Activated CD4-positive, alpha-beta T cell treated with anti-CD3 and anti-CD28 coated beads, Interleukin-2, amount 10 ng/mL, durations not matched to agents 24 days and 14 days (primary cell): ENCODE measurements at regions of chr5 and their contacts with region 1.

Region 1: DNA sequence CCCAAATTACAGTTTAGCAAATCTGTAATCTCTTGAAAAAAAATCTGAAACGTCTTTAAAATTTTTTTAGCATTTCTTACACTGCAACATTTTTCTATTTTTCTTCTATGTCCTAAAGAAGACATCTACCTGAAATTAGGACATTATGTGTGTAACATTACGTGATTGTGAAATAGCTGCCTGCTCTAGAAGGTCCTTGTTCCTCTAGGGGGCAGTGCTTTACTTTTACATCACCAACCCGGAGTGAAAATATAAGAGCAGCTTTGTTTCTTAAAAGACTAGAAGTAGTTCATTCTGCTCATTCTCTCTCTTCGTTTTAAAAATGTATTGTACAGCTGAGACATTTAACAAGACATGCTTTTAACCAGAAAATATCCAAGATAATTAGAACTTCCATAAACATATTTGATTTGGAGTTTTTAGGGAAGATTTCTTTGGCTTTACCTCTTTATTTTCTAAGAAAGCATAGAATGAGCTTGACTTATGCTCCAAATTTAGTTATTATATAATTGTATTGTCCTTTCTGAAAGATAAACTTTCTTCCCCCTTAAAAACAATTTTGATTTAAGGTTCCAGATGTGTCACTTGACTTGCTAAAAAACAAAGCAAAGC is 48.1 kb upstream of the RIOK2 start:
- DNase-seq: peak; percentile 78
- H3K4me3 Mint-ChIP-seq: no peak overlapping the region
- H3K27ac Mint-ChIP-seq: no peak overlapping the region
- H3K4me1 Mint-ChIP-seq: no peaks in the 10 kb centered on the region
- H3K27me3 Mint-ChIP-seq: peaks cover 6% of the 10 kb centered on the region

Region 2: DNA sequence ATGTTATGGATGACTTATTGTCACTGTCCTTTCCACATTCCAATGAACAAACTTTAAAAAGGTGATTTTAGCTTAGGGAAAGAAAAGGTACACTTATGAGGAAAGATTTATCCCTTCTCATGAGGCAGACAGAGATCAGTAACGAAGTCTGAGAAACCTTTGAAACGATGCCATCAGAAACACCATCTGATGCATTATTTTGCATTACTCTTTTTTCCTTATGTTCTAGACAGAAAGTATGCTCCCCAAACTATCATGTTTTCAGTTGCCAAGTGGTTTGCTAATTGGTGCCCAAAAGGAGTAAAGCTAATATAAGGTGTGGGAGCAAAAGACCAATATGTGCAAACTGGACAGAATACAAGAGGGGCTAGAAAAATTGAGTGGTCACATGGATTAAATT is 349.6 kb after region 1 on chr5:
- intact Hi-C with region 1: no loop called
- DNase-seq: no peak
- H3K4me3 Mint-ChIP-seq: no peak overlapping the region
- H3K27ac Mint-ChIP-seq: no peak overlapping the region
- H3K4me1 Mint-ChIP-seq: no peaks in the 10 kb centered on the region
- H3K27me3 Mint-ChIP-seq: no peaks in the 10 kb centered on the region

Region 3: DNA sequence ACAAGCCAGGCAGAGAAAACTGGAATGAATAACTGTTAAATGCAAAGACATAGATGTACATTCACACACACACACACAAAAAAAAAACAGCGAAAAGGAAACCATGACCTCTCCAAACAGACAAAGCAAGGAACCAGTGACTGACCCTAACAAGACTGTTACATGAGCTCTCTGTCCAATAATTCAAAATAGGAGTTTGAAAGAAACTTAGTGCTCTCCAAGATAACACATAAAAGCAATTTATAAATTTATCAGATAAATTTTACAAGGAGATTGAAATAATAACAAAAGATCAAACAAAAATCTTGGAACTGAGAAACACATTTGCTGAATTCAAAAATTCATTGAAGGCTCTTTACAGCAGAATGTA is 1118.8 kb after region 1 on chr5:
- intact Hi-C with region 1: loop called (anchors 10 kb)
- DNase-seq: no peak
- H3K4me3 Mint-ChIP-seq: no peak overlapping the region
- H3K27ac Mint-ChIP-seq: no peak overlapping the region
- H3K4me1 Mint-ChIP-seq: no peaks in the 10 kb centered on the region
- H3K27me3 Mint-ChIP-seq: peaks cover 2% of the 10 kb centered on the region